Vagina (tissue), 2 donors: ENCODE measurements at regions of chr16 and their contacts with region 1.

Region 1: GRCh38 chr16:56317998-56318826 is 107.1 kb downstream of the AMFR start:
- DNase-seq: no peak
- H3K4me3 ChIP-seq: peak overlapping the region in 1 of 2 donors; percentile 27
- H3K27ac ChIP-seq: peak overlapping the region; percentile 44
- H3K4me1 ChIP-seq: peaks cover 11% of the 10 kb centered on the region
- H3K27me3 ChIP-seq: no peaks in the 10 kb centered on the region
- CTCF ChIP-seq: peak; percentile 88 to 96 (median 91)
- POLR2A ChIP-seq: no peak

Region 2: GRCh38 chr16:55622930-55623561 is 695.2 kb before region 1 on chr16:
- intact Hi-C with region 1: no loop called
- DNase-seq: no peak
- H3K4me3 ChIP-seq: no peak overlapping the region
- H3K27ac ChIP-seq: no peak overlapping the region
- H3K4me1 ChIP-seq: no peaks in the 10 kb centered on the region
- H3K27me3 ChIP-seq: no peaks in the 10 kb centered on the region
- CTCF ChIP-seq: no peak
- POLR2A ChIP-seq: no peak

Region 3: GRCh38 chr16:55943267-55943666 is 374.9 kb before region 1 on chr16:
- intact Hi-C with region 1: loop called (anchors 2 kb)
- DNase-seq: no peak
- H3K4me3 ChIP-seq: no peak overlapping the region
- H3K27ac ChIP-seq: no peak overlapping the region
- H3K4me1 ChIP-seq: peaks cover 5% of the 10 kb centered on the region
- H3K27me3 ChIP-seq: no peaks in the 10 kb centered on the region
- CTCF ChIP-seq: no peak
- POLR2A ChIP-seq: no peak